WTC11 (cell line): ENCODE measurements at regions of chr15 and their contacts with region 1.

Region 1: GRCh38 chr15:26974120-26974780 is 3.3 kb downstream of the GABRG3 start:
- DNase-seq: peak; percentile 40
- ATAC-seq: peak; percentile 55
- H3K4me3 Mint-ChIP-seq: peak overlapping the region; percentile 18; the same call in 1 of the 2 replicates
- H3K27ac Mint-ChIP-seq: no peak overlapping the region
- H3K4me1 Mint-ChIP-seq: peaks cover 7% of the 10 kb centered on the region
- H3K27me3 Mint-ChIP-seq: peaks cover 44% of the 10 kb centered on the region
- CTCF ChIP-seq: peak; percentile 51

Region 2: GRCh38 chr15:27017168-27017809 is 43.0 kb after region 1 on chr15:
- CTCF ChIA-PET with region 1: interaction called, 12 read pairs
- POLR2A ChIA-PET with region 1: no interaction called
- DNase-seq: peak; percentile 91
- ATAC-seq: peak; percentile 98
- H3K4me3 Mint-ChIP-seq: no peak overlapping the region
- H3K27ac Mint-ChIP-seq: no peak overlapping the region
- H3K4me1 Mint-ChIP-seq: no peaks in the 10 kb centered on the region
- H3K27me3 Mint-ChIP-seq: no peaks in the 10 kb centered on the region
- CTCF ChIP-seq: peak; percentile 84